ENCODE measurements at regions of chr17 and their contacts with region 1.

Region 1: DNA sequence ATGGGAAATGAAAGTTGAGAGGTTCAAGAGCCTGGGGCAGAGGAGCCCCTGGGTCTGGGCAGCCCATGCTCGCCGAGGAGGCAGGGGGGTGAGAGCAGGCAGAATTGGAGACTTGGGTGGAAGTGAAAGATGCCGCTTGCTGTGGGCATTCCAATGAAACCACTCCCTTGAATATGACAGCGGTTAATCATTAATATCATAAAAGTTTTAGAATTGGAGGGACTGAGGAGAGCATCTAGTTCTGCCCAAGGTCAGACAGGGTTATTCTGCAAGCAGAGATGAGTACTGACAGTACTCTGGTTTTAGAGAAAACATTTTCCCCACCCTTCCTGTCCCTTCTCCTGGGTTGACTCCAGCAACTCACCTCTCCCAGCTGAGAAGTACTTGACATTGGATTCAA is 180.2 kb downstream of the MSI2 start:
- DNase-seq: no peak
- H3K4me3 ChIP-seq: no peak overlapping the region
- H3K27ac ChIP-seq: no peak overlapping the region
- H3K4me1 ChIP-seq: peaks cover 0 to 25% (median 15%) of the 10 kb centered on the region in 4 donors
- H3K27me3 ChIP-seq: no peaks in the 10 kb centered on the region
- CTCF ChIP-seq: no peak
- EP300 ChIP-seq: no peak
- POLR2A ChIP-seq: no peak

Region 2: GRCh38 chr17:57338257-57338914 is 98.2 kb before region 1 on chr17:
- in situ Hi-C with region 1: no loop called
- intact Hi-C with region 1: loop called (anchors 2 kb)
- DNase-seq: no peak
- H3K4me3 ChIP-seq: no peak overlapping the region
- H3K27ac ChIP-seq: no peak overlapping the region
- H3K4me1 ChIP-seq: peaks cover 0 to 4% (median 0%) of the 10 kb centered on the region in 4 donors
- H3K27me3 ChIP-seq: no peaks in the 10 kb centered on the region
- CTCF ChIP-seq: no peak
- EP300 ChIP-seq: no peak
- POLR2A ChIP-seq: no peak

Region 3: DNA sequence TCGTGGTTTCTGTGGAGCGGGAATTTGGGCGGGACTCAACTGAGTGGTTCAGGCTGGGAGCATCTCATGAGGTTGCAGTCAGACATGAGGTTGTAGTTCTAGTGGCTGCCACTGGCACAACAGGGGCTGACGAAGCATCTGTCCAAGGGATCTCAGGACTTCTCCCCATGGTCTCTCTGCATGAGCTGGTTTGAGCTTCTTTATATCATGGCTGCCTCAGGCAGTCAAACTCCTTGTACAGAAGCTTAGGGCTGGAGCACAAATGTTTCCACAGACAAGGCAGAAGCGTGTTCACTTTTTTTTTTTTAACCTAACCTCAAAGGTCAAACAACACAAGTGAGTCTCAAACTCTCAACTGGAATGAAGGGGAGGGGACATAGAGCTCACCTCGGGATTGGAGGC is 63.1 kb after region 1 on chr17:
- in situ Hi-C with region 1: no loop called
- intact Hi-C with region 1: no loop called
- DNase-seq: no peak
- H3K4me3 ChIP-seq: no peak overlapping the region
- H3K27ac ChIP-seq: no peak overlapping the region
- H3K4me1 ChIP-seq: no peaks in the 10 kb centered on the region
- H3K27me3 ChIP-seq: no peaks in the 10 kb centered on the region
- CTCF ChIP-seq: no peak
- EP300 ChIP-seq: no peak
- POLR2A ChIP-seq: no peak